ENCODE measurements at regions of chr17 and their contacts with region 1.

Region 1: GRCh38 chr17:82193520-82194220 is 19.0 kb downstream of the CCDC57 start:
- DNase-seq: no peak
- ATAC-seq: no peak
- H3K4me3 Mint-ChIP-seq: no peak overlapping the region
- H3K27ac Mint-ChIP-seq: peak overlapping the region; percentile 50
- H3K4me1 Mint-ChIP-seq: peaks cover 18% of the 10 kb centered on the region
- H3K27me3 Mint-ChIP-seq: no peaks in the 10 kb centered on the region

Region 2: GRCh38 chr17:82112914-82113311 is 80.8 kb before region 1 on chr17:
- CTCF ChIA-PET with region 1: no interaction called
- DNase-seq: no peak
- ATAC-seq: no peak
- H3K4me3 Mint-ChIP-seq: no peak overlapping the region
- H3K27ac Mint-ChIP-seq: no peak overlapping the region
- H3K4me1 Mint-ChIP-seq: peaks cover 9% of the 10 kb centered on the region
- H3K27me3 Mint-ChIP-seq: no peaks in the 10 kb centered on the region

Region 3: DNA sequence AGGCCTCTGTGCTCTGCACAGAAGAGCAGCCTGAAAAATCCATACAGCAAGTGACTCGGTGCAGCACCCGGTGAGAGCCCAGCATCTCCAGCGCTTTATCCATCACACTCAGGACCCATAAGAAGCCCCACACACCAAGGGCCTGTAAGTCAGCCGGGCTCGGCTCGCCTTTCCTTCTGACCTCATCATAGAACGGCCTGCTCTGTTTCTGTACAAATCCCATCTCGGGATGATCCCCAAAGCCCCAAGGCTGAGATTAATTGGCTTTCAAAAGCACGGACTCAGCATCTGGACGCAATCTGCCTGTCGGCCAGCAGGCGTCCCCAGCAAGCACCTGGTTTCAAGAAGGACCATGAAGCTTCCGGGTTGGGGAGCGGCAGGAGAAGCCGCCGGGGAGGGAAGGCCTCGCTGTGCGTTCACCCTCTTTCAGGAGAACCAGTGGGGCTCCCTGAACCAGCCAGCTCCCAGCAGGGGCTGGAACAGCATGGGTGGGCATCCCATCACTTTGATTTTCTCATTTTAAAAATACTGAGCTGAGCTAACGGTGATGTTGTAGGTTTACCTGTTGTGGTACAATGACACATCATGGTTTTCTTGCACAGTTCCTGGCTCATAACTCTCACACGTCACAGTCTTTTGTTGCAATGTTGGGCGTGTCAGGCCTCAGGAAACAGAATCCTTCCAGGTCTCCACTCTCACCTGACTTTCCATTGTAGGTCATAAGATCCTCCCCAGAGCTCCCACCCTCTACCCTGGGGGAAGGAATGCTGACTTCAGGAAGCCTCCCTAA is 12.2 kb after region 1 on chr17:
- CTCF ChIA-PET with region 1: interaction called, 10 read pairs
- DNase-seq: peak; percentile 92
- ATAC-seq: peak; percentile 86
- H3K4me3 Mint-ChIP-seq: peak overlapping the region; percentile 49
- H3K27ac Mint-ChIP-seq: peak overlapping the region; percentile 95
- H3K4me1 Mint-ChIP-seq: peaks cover 52% of the 10 kb centered on the region
- H3K27me3 Mint-ChIP-seq: no peaks in the 10 kb centered on the region

Region 4: DNA sequence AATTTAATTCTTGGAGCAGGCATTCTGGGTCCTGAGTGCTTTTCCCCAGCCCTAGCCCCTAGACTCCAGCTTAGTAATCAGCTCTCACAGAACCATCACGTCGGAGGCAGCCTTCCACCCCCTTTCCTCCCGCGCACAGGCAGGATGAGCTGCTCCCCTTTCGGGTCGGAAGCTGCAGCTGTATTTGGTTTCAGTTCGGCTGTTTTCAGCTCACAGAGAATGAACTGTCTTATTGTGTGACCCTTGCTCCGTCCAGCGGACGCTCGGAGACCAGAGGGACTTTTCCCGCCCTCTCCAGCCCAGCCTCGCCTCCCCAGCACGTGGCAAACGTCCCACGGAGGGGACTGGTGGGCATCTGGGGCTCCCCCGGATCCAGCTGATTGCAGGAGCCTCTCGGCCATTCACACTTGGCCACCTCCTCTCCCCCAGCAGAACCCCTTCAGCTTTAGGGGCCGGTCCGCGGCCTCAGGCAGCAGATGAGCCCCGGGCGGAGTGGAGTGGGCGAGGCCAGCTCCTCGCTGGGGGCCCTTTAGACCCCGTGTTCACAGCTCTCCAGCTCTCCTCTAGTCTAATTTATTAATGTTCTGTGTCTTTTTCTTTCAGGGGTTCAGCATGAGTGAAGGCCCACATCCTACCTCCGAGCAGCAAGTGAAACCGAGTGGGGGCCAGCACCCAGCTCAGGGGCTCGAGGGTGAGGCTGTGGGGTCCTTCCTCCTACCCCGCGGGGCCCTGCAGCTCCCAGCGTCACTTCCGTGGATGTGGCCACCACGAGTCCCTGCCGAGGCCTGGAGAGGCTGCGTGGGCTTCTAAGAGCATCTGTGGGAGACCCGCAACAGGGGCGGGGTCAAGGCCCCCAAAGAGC is 177.0 kb after region 1 on chr17:
- CTCF ChIA-PET with region 1: no interaction called
- DNase-seq: no peak
- ATAC-seq: peak; percentile 48
- H3K4me3 Mint-ChIP-seq: peak overlapping the region; percentile 54
- H3K27ac Mint-ChIP-seq: no peak overlapping the region
- H3K4me1 Mint-ChIP-seq: peaks cover 11% of the 10 kb centered on the region
- H3K27me3 Mint-ChIP-seq: peaks cover 61% of the 10 kb centered on the region